ENCODE measurements at regions of chr7 and their contacts with region 1.

Region 1: GRCh38 chr7:108094933-108095710 is 35.0 kb downstream of the LAMB4 start:
- DNase-seq: no peak
- H3K4me3 ChIP-seq: peak overlapping the region; percentile 15
- H3K27ac ChIP-seq: peak overlapping the region; percentile 88
- H3K27me3 ChIP-seq: no peaks in the 10 kb centered on the region
- CTCF ChIP-seq: no peak

Region 2: DNA sequence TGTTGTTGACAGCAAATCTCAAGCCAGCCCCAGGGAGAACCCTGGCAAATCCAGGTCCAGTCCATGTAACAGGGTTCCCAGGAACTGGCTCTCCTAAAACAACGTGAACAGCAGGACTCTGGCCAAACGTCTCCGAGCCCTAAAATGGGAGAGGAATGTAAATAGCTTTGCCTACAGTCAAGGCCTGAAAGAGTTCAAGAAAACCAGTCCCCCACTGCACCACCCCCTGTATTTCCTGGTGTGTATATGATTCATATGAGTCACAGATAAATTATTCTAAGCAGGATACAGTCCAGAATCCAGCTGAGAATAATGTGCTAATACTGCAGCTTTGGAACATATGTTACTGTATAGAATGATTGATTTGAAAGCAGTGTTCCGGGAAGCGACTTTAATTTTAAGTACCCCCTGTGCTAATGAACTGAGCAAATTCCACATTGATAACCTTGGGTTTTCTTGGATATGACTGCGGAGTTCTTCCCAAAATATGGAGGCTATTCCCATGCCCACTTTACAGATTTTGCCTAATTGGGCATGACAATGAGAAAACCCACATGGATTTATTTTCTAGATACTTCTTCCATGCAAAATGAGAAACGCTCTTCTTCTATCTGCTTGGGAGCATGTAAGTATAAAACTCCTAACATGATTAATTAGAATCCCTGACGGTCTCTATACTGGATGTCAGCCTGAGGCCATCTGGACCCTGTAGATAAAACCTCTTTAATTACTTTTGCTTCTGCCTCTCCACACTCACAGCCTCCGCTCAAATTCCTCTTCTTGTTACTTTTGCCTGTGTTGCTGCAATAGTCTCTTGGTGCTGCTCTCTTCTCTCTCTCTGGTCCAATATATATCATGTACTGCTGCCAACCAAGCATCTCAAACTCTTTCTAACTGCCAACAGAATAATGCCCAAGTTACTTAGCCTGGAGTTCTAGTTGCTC is 15.2 kb before region 1 on chr7:
- CTCF ChIA-PET with region 1: no interaction called
- POLR2A ChIA-PET with region 1: interaction called, 13 read pairs
- DNase-seq: peak; percentile 93
- H3K4me3 ChIP-seq: peak overlapping the region; percentile 36
- H3K27ac ChIP-seq: peak overlapping the region; percentile 91
- H3K27me3 ChIP-seq: no peaks in the 10 kb centered on the region
- CTCF ChIP-seq: no peak

Measured in AG04450 (cell line).